Activated CD8-positive, alpha-beta memory T cell treated with anti-CD3 and anti-CD28 coated beads, Interleukin-2, amount 10 ng/mL, durations not matched to agents 7 days and 5 days (primary cell): ENCODE measurements at regions of chr17 and their contacts with region 1.

Region 1: DNA sequence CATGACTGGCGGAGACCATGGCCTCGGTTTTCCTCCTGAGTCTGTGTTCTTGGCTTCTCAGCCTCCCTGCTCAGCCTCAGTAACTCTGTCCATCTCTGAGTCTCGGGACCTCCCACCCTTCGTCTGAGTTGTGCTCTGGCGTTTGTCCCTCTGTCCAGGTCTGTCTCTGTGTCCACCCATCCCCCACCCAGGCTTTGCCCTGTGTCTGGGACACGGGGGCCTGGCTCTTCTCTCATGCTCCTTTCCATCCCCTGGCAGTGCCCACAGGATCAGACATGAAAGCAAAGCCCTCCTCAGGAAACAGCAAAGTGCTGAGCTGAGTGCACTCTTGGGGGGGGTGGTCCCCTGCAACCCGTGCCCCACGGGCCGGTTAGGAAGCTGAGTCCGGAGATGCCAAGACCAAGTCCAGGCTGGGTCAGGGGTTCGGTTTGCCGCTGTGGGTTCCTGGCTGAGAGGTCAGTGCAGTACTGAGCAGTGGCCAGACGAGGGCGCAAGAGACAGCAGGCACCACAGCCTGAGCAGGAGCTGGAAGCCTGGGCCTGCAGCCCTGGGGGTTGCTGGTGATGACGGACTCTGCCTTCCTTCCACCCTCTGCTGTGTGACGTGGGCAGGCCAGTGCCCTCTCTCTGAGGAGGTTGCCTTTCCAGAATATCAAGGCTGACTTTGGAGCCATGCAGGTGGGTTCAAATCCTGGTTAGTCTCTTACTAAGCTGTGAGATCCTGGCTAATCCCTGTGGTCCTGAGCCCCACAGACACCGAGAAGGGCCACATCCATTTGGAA is 2.5 kb downstream of the P2RX1 start:
- DNase-seq: peak; percentile 89
- ATAC-seq: peak; percentile 79
- H3K4me3 Mint-ChIP-seq: no peak overlapping the region
- H3K27ac Mint-ChIP-seq: peak overlapping the region; percentile 9
- H3K4me1 Mint-ChIP-seq: peaks cover 37% of the 10 kb centered on the region
- H3K27me3 Mint-ChIP-seq: peaks cover 9% of the 10 kb centered on the region

Region 2: GRCh38 chr17:3818786-3819185 is 94.9 kb before region 1 on chr17:
- CTCF ChIA-PET with region 1: no interaction called
- DNase-seq: peak; percentile 22
- ATAC-seq: no peak
- H3K4me3 Mint-ChIP-seq: no peak overlapping the region
- H3K27ac Mint-ChIP-seq: no peak overlapping the region
- H3K4me1 Mint-ChIP-seq: peaks cover 7% of the 10 kb centered on the region
- H3K27me3 Mint-ChIP-seq: no peaks in the 10 kb centered on the region

Region 3: GRCh38 chr17:3845621-3846441 is 67.9 kb before region 1 on chr17 and contains the start of gene NCBP3:
- CTCF ChIA-PET with region 1: interaction called, 10 read pairs
- DNase-seq: peak; percentile 92
- ATAC-seq: peak; percentile 95
- H3K4me3 Mint-ChIP-seq: peak within 1 kb of the TSS; percentile 98
- H3K27ac Mint-ChIP-seq: peak within 1 kb of the TSS; percentile 94
- H3K4me1 Mint-ChIP-seq: peaks cover 25% of the 10 kb centered on the region
- H3K27me3 Mint-ChIP-seq: peaks cover 12% of the 10 kb centered on the region
- total RNA-seq, gene NCBP3: 46.3 to 48.7 TPM

Region 4: DNA sequence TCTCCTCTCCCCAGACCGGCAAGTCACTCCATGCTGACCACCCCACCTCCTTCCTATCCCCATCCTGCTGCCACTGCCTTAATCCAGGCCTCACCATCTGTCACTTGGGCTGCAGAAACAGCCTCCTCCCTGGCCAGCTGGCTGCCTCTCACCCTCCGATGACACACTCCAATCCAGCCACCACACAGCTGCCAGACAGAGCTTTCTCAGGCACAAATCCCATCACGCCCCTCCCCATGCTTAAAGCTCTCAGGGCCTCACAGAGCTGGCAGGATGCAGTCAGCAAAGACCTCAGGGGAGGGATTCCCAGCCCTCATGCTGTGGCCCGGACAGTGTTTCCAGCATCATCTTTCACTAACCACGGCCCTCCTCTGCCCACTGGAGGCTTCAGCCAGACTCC is 34.5 kb before region 1 on chr17:
- CTCF ChIA-PET with region 1: interaction called, 10 read pairs
- DNase-seq: no peak
- ATAC-seq: no peak
- H3K4me3 Mint-ChIP-seq: no peak overlapping the region
- H3K27ac Mint-ChIP-seq: no peak overlapping the region
- H3K4me1 Mint-ChIP-seq: no peaks in the 10 kb centered on the region
- H3K27me3 Mint-ChIP-seq: no peaks in the 10 kb centered on the region

Region 5: DNA sequence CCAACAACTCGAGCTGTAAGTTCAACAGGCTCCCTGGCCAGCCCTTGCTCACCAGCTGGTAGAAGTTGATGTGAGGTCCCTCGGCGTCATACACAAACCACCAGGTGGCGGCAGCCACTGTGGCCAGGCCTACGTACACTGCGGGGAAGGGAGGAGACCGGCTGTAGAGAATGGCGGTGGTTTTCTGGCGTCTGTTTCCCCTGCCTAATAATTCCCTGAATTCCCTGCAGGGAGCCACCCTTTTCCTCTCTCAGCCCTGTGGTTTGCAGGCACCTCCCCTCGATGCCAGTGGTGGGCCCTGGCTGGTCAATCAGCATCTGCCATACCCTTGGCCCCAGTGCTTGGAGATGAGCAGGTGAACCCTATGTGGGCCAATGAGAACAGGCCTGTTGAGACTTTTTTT is 21.4 kb after region 1 on chr17:
- CTCF ChIA-PET with region 1: interaction called, 15 read pairs
- DNase-seq: no peak
- ATAC-seq: peak; percentile 45
- H3K4me3 Mint-ChIP-seq: no peak overlapping the region
- H3K27ac Mint-ChIP-seq: no peak overlapping the region
- H3K4me1 Mint-ChIP-seq: peaks cover 4% of the 10 kb centered on the region
- H3K27me3 Mint-ChIP-seq: no peaks in the 10 kb centered on the region

Region 6: DNA sequence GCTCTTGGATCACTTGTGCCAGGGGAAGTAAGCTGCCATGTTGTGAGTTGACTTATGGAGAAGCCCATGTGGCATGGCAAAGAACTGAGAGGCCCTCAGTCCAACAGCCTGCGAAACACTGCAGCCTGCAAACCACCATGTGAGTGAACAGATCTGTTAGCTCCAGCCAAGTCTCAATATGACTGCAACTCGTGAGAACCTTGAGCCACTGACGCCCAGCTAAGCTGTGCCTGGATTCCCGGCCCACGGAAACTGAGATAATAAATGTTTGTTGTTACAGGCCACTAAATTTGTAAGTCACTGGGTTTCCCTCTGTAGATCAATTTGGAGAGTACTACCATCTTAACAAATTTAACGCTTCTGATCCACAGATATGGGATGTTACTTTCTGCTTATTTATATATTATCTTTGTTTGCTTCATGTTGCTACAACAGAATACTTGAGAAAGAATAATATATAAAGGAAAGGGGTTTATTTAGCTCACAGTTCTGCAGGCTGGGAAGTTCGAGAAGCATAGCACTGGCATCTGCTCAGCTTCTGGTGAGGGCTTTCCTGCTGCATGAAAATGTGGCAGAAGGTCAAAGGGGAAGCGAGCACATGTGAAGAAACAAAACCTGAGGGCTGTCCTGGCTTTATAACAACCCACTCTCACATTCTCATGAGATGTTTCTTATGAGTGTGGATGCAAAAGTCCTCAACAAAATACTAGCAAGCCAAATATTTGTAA is 79.9 kb after region 1 on chr17:
- CTCF ChIA-PET with region 1: interaction called, 125 read pairs
- DNase-seq: no peak
- ATAC-seq: no peak
- H3K4me3 Mint-ChIP-seq: no peak overlapping the region
- H3K27ac Mint-ChIP-seq: no peak overlapping the region
- H3K4me1 Mint-ChIP-seq: no peaks in the 10 kb centered on the region
- H3K27me3 Mint-ChIP-seq: peaks cover 31% of the 10 kb centered on the region

Region 7: DNA sequence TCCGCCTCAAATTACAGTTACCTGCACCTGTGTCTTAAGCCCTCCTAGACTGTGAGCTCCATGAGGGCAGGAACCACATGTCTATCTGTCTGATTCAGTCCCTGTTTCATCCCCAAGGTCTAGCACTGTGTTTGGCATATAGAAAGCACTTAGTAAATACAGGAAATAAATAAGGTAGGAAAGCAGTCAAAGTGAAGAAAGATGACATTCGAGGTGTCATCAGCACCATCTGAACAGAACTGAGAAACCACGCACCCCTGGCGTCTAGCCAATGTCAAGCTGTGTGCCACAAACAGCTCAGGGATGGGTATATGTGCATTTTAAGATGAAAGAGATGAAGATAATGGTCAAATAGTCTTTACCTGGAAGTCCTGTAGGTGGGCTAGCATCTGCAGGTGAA is 130.1 kb after region 1 on chr17:
- CTCF ChIA-PET with region 1: interaction called, 13 read pairs
- DNase-seq: peak; percentile 71
- ATAC-seq: peak; percentile 71
- H3K4me3 Mint-ChIP-seq: no peak overlapping the region
- H3K27ac Mint-ChIP-seq: peak overlapping the region; percentile 69
- H3K4me1 Mint-ChIP-seq: peaks cover 31% of the 10 kb centered on the region
- H3K27me3 Mint-ChIP-seq: no peaks in the 10 kb centered on the region

Region 8: DNA sequence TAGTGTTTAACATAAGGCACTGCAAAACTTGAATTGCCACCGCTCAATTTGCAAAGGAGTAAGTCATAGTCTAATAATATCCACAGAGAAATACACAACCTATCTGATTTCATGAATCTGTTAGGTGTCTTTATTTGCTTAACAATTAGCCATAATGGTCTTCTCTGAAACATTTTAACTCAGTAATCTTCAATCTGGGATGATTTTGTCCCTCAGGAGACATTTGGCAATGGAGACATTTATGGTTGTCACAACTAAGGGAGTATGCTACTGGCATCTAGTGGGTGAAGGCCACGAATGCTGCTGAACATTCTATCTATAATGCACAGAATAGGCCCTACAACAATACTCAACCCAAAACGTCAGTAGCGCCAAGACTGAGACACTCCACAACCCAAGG is 448.4 kb after region 1 on chr17:
- CTCF ChIA-PET with region 1: no interaction called
- DNase-seq: no peak
- ATAC-seq: no peak
- H3K4me3 Mint-ChIP-seq: no peak overlapping the region
- H3K27ac Mint-ChIP-seq: peak overlapping the region; percentile 9
- H3K4me1 Mint-ChIP-seq: peaks cover 51% of the 10 kb centered on the region
- H3K27me3 Mint-ChIP-seq: no peaks in the 10 kb centered on the region